AG04450 (cell line): ENCODE measurements at regions of chr6 and their contacts with region 1.

Region 1: GRCh38 chr6:71510057-71510713 is 221.6 kb downstream of the OGFRL1 start:
- DNase-seq: peak; percentile 55
- H3K4me3 ChIP-seq: no peak overlapping the region
- H3K27ac ChIP-seq: no peak overlapping the region
- H3K27me3 ChIP-seq: no peaks in the 10 kb centered on the region
- CTCF ChIP-seq: peak; percentile 79

Region 2: DNA sequence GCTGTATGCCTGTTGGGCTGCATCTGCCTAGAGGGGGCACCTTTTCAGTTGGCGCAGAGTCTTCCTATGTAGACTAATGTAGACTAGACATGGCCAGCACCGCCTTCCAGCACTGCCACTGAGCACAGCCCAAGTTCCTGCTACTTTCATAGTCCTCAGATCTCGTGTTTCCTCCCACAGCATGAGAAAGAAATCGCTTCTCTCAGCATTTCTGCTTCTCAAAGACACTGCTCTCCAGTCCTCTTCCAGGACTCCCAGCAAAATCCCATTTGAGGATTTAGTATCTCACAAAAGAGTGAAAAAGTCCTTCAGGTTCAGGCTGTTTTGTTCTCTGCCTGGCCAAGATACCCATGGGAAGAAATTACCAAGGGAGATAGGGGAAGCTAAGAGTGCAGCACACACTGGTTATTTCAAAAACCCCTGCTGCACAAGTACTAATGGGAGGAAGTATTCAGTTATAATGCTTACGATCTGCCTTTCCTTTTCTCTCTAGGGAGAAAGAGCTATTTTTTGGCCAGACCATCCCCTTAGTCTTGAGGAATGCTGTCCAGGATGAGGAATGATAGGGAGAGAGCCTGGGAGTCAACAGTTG is 185.9 kb before region 1 on chr6:
- CTCF ChIA-PET with region 1: no interaction called
- POLR2A ChIA-PET with region 1: no interaction called
- DNase-seq: no peak
- H3K4me3 ChIP-seq: no peak overlapping the region
- H3K27ac ChIP-seq: no peak overlapping the region
- H3K27me3 ChIP-seq: no peaks in the 10 kb centered on the region
- CTCF ChIP-seq: no peak

Region 3: GRCh38 chr6:71383901-71384489 is 126.2 kb before region 1 on chr6:
- CTCF ChIA-PET with region 1: interaction called, 116 read pairs
- POLR2A ChIA-PET with region 1: no interaction called
- DNase-seq: no peak
- H3K4me3 ChIP-seq: no peak overlapping the region
- H3K27ac ChIP-seq: no peak overlapping the region
- H3K27me3 ChIP-seq: no peaks in the 10 kb centered on the region
- CTCF ChIP-seq: peak; percentile 67

Region 4: DNA sequence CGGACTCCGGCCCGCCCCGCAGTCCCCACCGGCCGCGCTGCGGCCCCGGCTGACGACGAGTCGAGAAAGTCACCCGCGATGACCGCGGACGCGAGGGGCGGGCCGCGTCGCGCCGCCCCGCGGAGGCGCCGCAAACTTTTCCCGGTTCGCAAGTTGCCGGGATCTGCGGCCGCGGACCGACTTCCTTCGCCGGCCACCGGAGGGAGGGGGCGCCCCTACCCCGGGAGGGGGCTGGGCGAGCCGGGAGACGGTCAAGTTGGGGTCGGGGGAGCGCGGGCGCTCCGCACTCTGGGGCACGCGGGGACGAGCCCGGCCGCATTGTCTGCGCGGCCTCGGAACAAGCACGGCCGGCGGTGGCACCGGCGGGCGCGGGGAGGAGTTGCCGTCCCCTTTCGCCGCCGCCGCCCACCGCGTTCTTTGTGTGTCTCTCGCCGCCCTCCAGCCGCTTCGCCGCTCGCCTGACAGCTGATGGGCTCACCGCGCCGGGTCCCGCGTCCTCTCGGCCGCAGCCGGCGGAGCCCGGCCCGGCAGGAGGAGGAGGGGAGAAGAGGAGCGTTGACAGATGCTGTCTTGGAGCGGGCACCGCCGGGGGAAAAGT is 90.0 kb before region 1 on chr6:
- CTCF ChIA-PET with region 1: interaction called, 12 read pairs
- POLR2A ChIA-PET with region 1: no interaction called
- DNase-seq: no peak
- H3K4me3 ChIP-seq: peak overlapping the region; percentile 84
- H3K27ac ChIP-seq: no peak overlapping the region
- H3K27me3 ChIP-seq: no peaks in the 10 kb centered on the region
- CTCF ChIP-seq: no peak

Region 5: GRCh38 chr6:71551798-71552197 is 41.6 kb after region 1 on chr6:
- CTCF ChIA-PET with region 1: no interaction called
- POLR2A ChIA-PET with region 1: no interaction called
- DNase-seq: no peak
- H3K4me3 ChIP-seq: no peak overlapping the region
- H3K27ac ChIP-seq: no peak overlapping the region
- H3K27me3 ChIP-seq: no peaks in the 10 kb centered on the region
- CTCF ChIP-seq: no peak